Activated CD4-positive, alpha-beta memory T cell treated with anti-CD3 and anti-CD28 coated beads, Interleukin-2, amount 10 ng/mL, durations not matched to agents 7 days and 5 days (primary cell): ENCODE measurements at regions of chrX and their contacts with region 1.

Region 1: GRCh38 chrX:16670998-16671397 is 21.0 kb downstream of the S100G start:
- DNase-seq: peak; percentile 23
- H3K4me3 Mint-ChIP-seq: no peak overlapping the region
- H3K27ac Mint-ChIP-seq: no peak overlapping the region
- H3K4me1 Mint-ChIP-seq: no peaks in the 10 kb centered on the region
- H3K27me3 Mint-ChIP-seq: no peaks in the 10 kb centered on the region

Region 2: DNA sequence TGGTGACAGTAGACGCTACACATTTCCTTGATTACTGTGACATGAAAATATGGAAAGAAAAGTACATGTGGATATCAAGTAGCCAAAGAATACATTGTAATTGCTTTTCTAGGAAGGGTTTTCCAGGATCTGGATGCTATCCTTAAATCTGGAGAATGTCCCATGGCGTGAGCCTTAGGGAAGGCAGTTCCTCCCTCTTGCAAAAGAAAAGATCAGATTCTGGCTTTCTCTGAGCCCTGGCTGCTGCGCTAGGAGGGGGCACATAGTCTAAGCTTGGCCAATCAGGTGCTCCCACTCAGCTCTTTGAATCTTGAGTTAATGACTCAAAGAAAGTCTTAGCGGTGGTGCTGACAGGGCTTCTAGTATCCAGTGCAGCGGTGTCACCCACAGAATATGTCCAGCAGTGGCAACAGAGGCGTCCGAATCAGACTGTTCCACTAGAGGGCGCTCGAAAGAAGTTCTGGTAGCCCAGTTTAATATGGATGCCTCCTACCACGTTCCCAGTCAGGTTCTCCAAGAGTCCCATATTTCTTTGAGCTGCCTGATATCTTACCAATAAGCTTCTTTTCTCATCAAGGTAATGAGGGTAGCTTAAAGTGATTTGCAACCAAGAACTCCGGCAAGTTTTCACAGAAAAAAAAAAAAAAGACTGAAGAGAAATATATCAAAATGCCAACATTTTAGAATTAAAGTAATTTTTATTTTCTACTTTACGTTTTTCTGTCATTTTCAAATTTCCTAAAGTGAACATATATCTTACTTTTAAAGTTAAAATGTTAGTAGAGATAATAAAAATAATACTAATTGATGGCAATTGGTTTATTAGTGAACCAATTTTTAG is 234.4 kb before region 1 on chrX:
- CTCF ChIA-PET with region 1: interaction called, 11 read pairs
- POLR2A ChIA-PET with region 1: no interaction called
- DNase-seq: peak; percentile 58
- H3K4me3 Mint-ChIP-seq: no peak overlapping the region
- H3K27ac Mint-ChIP-seq: no peak overlapping the region
- H3K4me1 Mint-ChIP-seq: peaks cover 10% of the 10 kb centered on the region
- H3K27me3 Mint-ChIP-seq: no peaks in the 10 kb centered on the region

Region 3: DNA sequence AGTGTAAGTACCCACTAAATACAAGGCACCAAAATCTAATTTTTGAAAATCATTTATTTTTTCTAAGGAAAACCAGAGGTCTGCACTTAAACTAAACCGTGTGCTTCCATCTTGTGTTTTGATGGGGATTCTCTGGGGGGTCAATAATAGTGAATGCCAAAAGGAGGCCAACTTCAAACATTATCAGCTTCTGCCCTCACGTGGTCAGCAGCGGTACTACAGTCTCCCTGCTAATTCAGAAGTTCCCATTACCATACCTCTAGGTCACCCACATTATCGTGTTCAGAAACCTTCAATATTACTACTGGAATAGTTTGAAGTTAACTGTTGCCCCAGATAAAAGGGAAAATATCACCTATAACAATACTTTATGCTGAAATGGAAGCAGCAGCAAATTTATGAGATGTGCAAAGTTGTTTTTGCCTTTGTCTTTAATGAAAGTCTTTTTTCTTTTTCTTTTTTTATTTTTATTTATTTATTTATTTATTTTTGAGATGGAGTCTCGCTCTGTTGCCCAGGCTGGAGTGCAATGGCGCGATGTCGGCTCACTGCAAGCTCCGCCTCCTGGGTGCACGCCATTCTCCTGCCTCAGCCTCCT is 24.2 kb after region 1 on chrX:
- CTCF ChIA-PET with region 1: no interaction called
- POLR2A ChIA-PET with region 1: no interaction called
- DNase-seq: peak; percentile 60
- H3K4me3 Mint-ChIP-seq: no peak overlapping the region
- H3K27ac Mint-ChIP-seq: no peak overlapping the region
- H3K4me1 Mint-ChIP-seq: no peaks in the 10 kb centered on the region
- H3K27me3 Mint-ChIP-seq: no peaks in the 10 kb centered on the region